ENCODE measurements at regions of chr4 and their contacts with region 1.

Region 1: DNA sequence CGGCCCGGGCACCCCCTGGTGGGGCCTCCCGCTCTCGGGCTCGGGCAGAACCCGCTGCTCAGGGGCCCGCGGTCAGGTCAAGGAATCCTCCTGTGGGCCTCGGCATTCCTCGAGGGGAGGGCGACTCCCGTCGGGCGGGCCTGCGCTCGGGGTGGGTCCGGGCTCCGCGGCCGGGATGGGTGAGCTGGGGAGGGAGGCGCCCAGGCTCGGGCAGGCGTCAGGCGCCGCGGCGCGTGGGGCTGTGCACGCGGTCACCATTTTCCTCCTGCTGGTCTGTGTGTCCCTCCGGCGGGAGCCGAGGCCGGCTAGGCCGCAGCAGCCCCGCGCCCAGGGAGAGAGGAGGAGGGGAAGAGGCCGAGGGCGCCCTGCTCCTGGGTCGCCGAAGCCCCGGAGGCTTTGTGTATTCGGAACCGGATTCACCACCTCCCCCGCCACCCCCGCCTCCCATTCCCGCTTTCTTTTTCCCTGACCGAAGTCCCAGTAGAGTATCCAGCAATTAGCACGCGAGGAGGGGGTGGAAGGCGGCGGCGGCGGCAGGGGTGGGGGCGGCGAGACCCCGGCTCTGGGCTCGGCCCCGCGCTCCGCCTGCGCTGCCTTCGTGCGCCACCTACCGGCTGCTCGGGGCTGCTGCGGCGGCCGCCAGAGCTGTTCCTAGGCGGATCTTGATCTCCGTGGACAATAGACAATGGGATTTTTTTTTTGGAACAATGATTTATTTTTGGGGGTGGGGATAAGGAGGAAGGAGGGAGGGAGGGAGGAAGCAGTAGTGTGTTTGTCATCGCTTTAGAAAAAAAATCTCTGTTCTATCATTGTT is 99.0 kb upstream of the MAML3 start:
- DNase-seq: peak; percentile 71 to 88 (median 76)
- ATAC-seq: peak; percentile 56 to 94 (median 88)
- H3K4me3 ChIP-seq: peak overlapping the region; percentile 47 to 93 (median 66)
- H3K27ac ChIP-seq: peak overlapping the region; percentile 78 to 95 (median 90)
- H3K4me1 ChIP-seq: peaks cover 0 to 33% (median 12%) of the 10 kb centered on the region in 12 donors
- H3K27me3 ChIP-seq: no peaks in the 10 kb centered on the region
- CTCF ChIP-seq: peak; percentile 85 to 99 (median 97)
- POLR2A ChIP-seq: no peak

Region 2: DNA sequence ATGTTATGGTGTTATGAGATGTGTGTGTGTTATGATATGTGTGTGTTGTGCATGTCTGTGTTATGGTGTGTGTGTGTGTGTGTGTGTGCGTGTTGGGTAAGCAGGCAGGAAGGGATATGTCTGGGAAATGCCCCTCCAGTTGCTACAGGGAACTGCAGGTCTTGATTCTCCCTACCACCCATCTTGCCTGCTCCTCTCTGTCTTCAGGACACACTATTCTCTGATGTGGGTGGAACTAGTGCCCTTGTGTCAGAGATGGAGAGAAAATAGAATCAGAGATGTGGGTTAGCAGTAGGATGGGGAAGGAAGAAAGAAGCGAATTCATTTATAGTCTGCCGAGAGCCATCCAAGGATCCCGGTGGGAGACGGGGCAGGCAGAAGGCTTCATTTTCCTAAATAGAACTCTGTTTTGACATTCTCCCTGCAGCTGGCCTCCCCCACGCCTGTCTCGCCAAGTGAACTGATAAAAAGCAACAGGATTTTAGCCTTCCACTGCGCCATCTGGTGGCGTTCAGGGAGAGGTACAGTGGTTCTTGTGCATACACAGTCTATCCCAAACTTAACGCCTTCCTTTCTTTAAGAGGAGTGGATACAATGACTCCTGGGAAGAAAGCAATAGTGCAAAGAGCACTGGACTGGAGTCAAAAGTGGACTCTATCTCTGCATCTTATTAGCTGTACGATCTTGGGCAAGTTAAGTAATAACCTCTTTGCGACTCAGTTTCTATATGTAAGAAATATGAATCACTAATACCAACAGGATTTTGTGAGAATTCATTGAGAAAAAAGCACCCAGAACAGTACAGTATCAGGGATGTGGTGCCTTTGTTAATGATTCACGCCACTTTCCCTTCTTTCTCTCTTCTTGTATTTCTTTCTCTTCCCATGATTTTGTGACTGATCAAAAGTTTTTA is 601.4 kb before region 1 on chr4:
- intact Hi-C with region 1: loop called in 4 of 10 experiments (anchors 5 to 10 kb)
- DNase-seq: peak; percentile 81 to 92 (median 84)
- ATAC-seq: peak; percentile 75 to 90 (median 86)
- H3K4me3 ChIP-seq: peak overlapping the region in 5 of 12 donors; percentile 6 to 43 (median 26)
- H3K27ac ChIP-seq: no peak overlapping the region
- H3K4me1 ChIP-seq: peaks cover 0 to 10% (median under 1%) of the 10 kb centered on the region in 12 donors
- H3K27me3 ChIP-seq: no peaks in the 10 kb centered on the region
- CTCF ChIP-seq: peak; percentile 85 to 96 (median 92)
- POLR2A ChIP-seq: no peak

Region 3: GRCh38 chr4:139734875-139735380 is 518.0 kb before region 1 on chr4:
- intact Hi-C with region 1: loop called (anchors 1 to 5 kb)
- DNase-seq: peak; percentile 92 to 93 (median 93)
- ATAC-seq: peak; percentile 93 to 96 (median 96)
- H3K4me3 ChIP-seq: peak overlapping the region; percentile 3 to 70 (median 54)
- H3K27ac ChIP-seq: peak overlapping the region; percentile 53 to 93 (median 82)
- H3K4me1 ChIP-seq: peaks cover 0 to 57% (median 34%) of the 10 kb centered on the region in 12 donors
- H3K27me3 ChIP-seq: no peaks in the 10 kb centered on the region
- CTCF ChIP-seq: peak; percentile 73 to 97 (median 92)
- POLR2A ChIP-seq: peak in 1 of 2 donors; percentile 27

Region 4: GRCh38 chr4:139887962-139888735 is 364.8 kb before region 1 on chr4:
- intact Hi-C with region 1: loop called in 1 of 10 experiments (anchors 10 kb)
- DNase-seq: no peak
- ATAC-seq: no peak
- H3K4me3 ChIP-seq: no peak overlapping the region
- H3K27ac ChIP-seq: peak overlapping the region in 1 of 12 donors; percentile 40
- H3K4me1 ChIP-seq: peaks cover 0 to 25% (median 0%) of the 10 kb centered on the region in 12 donors
- H3K27me3 ChIP-seq: no peaks in the 10 kb centered on the region
- CTCF ChIP-seq: no peak
- POLR2A ChIP-seq: no peak

Region 5: DNA sequence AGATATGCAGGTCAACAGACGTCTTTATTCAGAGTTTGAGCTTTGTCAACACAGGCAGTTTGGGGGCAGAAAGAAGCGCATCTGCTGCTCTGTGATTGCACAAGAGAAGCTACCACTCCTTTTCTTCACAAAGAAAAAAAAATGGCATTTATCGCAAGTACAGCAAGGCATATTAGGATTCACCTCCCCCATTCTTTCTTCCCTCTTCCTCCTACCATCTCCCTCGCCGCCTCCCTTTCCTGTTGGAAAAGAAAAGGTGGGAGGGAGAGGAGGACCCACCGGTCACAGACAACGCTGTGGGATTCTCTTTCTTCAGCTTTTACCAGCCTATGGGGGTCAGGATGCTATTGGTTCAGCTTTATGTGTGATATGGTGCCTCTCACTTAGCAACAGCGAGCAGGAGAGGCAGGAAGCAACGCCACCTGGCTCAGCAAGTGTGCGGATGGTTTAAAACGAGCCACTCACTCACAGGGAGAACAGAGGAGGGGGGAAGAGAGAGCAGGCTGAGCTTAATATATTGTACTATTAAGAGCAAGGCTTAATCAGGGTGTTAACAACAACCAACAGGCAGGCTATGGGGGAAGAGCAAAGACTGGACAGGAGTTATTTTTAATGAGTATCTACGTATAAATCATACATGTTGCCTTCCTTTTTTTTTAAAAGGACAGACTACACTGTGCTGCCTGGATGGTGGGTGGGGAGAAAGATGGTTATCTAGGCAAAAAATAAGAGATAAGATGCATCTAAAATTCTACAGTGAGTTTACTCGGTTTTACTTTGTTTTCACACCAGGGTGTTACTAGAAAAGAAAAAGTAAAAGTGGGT is 203.7 kb before region 1 on chr4:
- intact Hi-C with region 1: loop called in 9 of 10 experiments (anchors 1 to 5 kb)
- DNase-seq: peak in 4 of 5 donors; percentile 54 to 63 (median 58)
- ATAC-seq: peak; percentile 55 to 88 (median 83)
- H3K4me3 ChIP-seq: peak overlapping the region; percentile 2 to 59 (median 42)
- H3K27ac ChIP-seq: peak overlapping the region in 11 of 12 donors; percentile 28 to 79 (median 53)
- H3K4me1 ChIP-seq: peaks cover 0 to 60% (median 28%) of the 10 kb centered on the region in 12 donors
- H3K27me3 ChIP-seq: no peaks in the 10 kb centered on the region
- CTCF ChIP-seq: peak in 5 of 12 donors; percentile 27 to 55 (median 39)
- POLR2A ChIP-seq: no peak

Region 6: GRCh38 chr4:140126261-140126660 is 126.7 kb before region 1 on chr4:
- intact Hi-C with region 1: no loop called
- DNase-seq: no peak
- ATAC-seq: no peak
- H3K4me3 ChIP-seq: no peak overlapping the region
- H3K27ac ChIP-seq: no peak overlapping the region
- H3K4me1 ChIP-seq: peaks cover 0 to 8% (median 1%) of the 10 kb centered on the region in 12 donors
- H3K27me3 ChIP-seq: no peaks in the 10 kb centered on the region
- CTCF ChIP-seq: no peak
- POLR2A ChIP-seq: no peak

Region 7: GRCh38 chr4:140326395-140326993 is 73.5 kb after region 1 on chr4:
- intact Hi-C with region 1: loop called in 4 of 10 experiments (anchors 5 kb)
- DNase-seq: peak in 1 of 5 donors; percentile 22
- ATAC-seq: peak in 3 of 4 donors; percentile 63 to 75 (median 71)
- H3K4me3 ChIP-seq: no peak overlapping the region
- H3K27ac ChIP-seq: no peak overlapping the region
- H3K4me1 ChIP-seq: peaks cover 0 to 7% (median 0%) of the 10 kb centered on the region in 12 donors
- H3K27me3 ChIP-seq: no peaks in the 10 kb centered on the region
- CTCF ChIP-seq: peak; percentile 42 to 79 (median 70)
- POLR2A ChIP-seq: no peak

Region 8: DNA sequence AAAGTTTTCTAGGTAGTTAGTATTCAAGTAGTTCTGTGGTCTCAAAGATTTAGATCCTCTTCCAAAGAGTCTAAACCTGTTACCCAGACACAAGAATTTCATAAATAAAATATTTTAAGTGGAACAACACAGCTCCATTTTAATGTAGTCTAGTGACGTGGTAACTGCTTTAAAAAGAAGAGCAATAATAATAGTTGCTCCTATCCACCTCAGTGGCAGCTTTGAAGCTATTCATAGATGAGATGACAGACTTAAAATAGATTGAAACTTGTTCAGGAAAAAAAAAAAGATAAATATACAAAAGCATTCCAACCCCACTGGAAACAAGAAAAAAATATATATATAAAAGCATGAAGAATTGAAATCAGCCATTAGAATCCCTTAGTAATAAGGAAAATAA is 135.1 kb after region 1 on chr4:
- intact Hi-C with region 1: no loop called
- DNase-seq: no peak
- ATAC-seq: peak; percentile 44 to 72 (median 67)
- H3K4me3 ChIP-seq: no peak overlapping the region
- H3K27ac ChIP-seq: peak overlapping the region in 3 of 12 donors; percentile 11 to 18 (median 13)
- H3K4me1 ChIP-seq: peaks cover 0 to 7% (median 0%) of the 10 kb centered on the region in 12 donors
- H3K27me3 ChIP-seq: no peaks in the 10 kb centered on the region
- CTCF ChIP-seq: no peak
- POLR2A ChIP-seq: no peak

Measured in heart left ventricle (tissue), 16 donors.